CD4-positive, alpha-beta T cell (primary cell): ENCODE measurements at regions of chrX and their contacts with region 1.

Region 1: GRCh38 chrX:47193475-47194193 is at the start of gene UBA1:
- DNase-seq: peak; percentile 83 to 99 (median 92)
- ATAC-seq: peak; percentile 79
- H3K4me3 ChIP-seq: peak within 1 kb of the TSS; percentile 78
- H3K4me3 Mint-ChIP-seq: peak within 1 kb of the TSS; percentile 99
- H3K27ac ChIP-seq: peak within 1 kb of the TSS; percentile 83 to 88
- H3K27ac Mint-ChIP-seq: peak within 1 kb of the TSS; percentile 92
- H3K4me1 ChIP-seq: peaks cover 70% of the 10 kb centered on the region
- H3K4me1 Mint-ChIP-seq: peaks cover 71% of the 10 kb centered on the region
- H3K27me3 ChIP-seq: no peaks in the 10 kb centered on the region
- H3K27me3 Mint-ChIP-seq: no peaks in the 10 kb centered on the region
- CTCF ChIP-seq: peak; percentile 57
- total RNA-seq, gene UBA1: 70.0 to 72.1 TPM

Region 2: GRCh38 chrX:46140272-46140671 is 1053.4 kb before region 1 on chrX:
- CTCF ChIA-PET with region 1: no interaction called
- POLR2A ChIA-PET with region 1: no interaction called
- intact Hi-C with region 1: no loop called
- DNase-seq: no peak
- ATAC-seq: no peak
- H3K4me3 ChIP-seq: no peak overlapping the region
- H3K4me3 Mint-ChIP-seq: no peak overlapping the region
- H3K27ac ChIP-seq: no peak overlapping the region
- H3K27ac Mint-ChIP-seq: no peak overlapping the region
- H3K4me1 ChIP-seq: no peaks in the 10 kb centered on the region
- H3K4me1 Mint-ChIP-seq: no peaks in the 10 kb centered on the region
- H3K27me3 ChIP-seq: no peaks in the 10 kb centered on the region
- H3K27me3 Mint-ChIP-seq: no peaks in the 10 kb centered on the region
- CTCF ChIP-seq: no peak

Region 3: GRCh38 chrX:47144626-47145394 is 48.8 kb before region 1 on chrX and contains the starts of genes NDUFB11 and RBM10:
- CTCF ChIA-PET with region 1: interaction called, 7 read pairs
- POLR2A ChIA-PET with region 1: interaction called, 29 read pairs
- intact Hi-C with region 1: loop called (anchors 1 to 2 kb)
- DNase-seq: peak; percentile 74 to 95 (median 84)
- ATAC-seq: peak; percentile 81
- H3K4me3 ChIP-seq: peak within 1 kb of the TSS; percentile 85
- H3K4me3 Mint-ChIP-seq: peak within 1 kb of the TSS; percentile 98
- H3K27ac ChIP-seq: peak within 1 kb of the TSS; percentile 88 to 93
- H3K27ac Mint-ChIP-seq: peak within 1 kb of the TSS; percentile 99
- H3K4me1 ChIP-seq: peaks cover 31% of the 10 kb centered on the region
- H3K4me1 Mint-ChIP-seq: peaks cover 52% of the 10 kb centered on the region
- H3K27me3 ChIP-seq: no peaks in the 10 kb centered on the region
- H3K27me3 Mint-ChIP-seq: no peaks in the 10 kb centered on the region
- CTCF ChIP-seq: peak; percentile 58
- total RNA-seq, gene NDUFB11: 50.1 to 53.2 TPM
- total RNA-seq, gene RBM10: 27.3 to 29.4 TPM

Region 4: GRCh38 chrX:47233337-47234113 is 39.9 kb after region 1 on chrX:
- CTCF ChIA-PET with region 1: no interaction called
- POLR2A ChIA-PET with region 1: interaction called, 19 read pairs
- intact Hi-C with region 1: loop called in 1 of 2 experiments (anchors 1 kb)
- DNase-seq: peak; percentile 87 to 98 (median 92)
- ATAC-seq: peak; percentile 88
- H3K4me3 ChIP-seq: peak overlapping the region; percentile 91
- H3K4me3 Mint-ChIP-seq: peak overlapping the region; percentile 91
- H3K27ac ChIP-seq: peak overlapping the region; percentile 95 to 98
- H3K27ac Mint-ChIP-seq: peak overlapping the region; percentile 93
- H3K4me1 ChIP-seq: peaks cover 10% of the 10 kb centered on the region
- H3K4me1 Mint-ChIP-seq: peaks cover 31% of the 10 kb centered on the region
- H3K27me3 ChIP-seq: no peaks in the 10 kb centered on the region
- H3K27me3 Mint-ChIP-seq: no peaks in the 10 kb centered on the region
- CTCF ChIP-seq: no peak

Region 5: GRCh38 chrX:47384502-47384901 is 190.9 kb after region 1 on chrX:
- CTCF ChIA-PET with region 1: interaction called, 12 read pairs
- POLR2A ChIA-PET with region 1: interaction called, 10 read pairs
- intact Hi-C with region 1: loop called (anchors 1 kb)
- DNase-seq: peak; percentile 51 to 87 (median 63)
- ATAC-seq: peak; percentile 50
- H3K4me3 ChIP-seq: no peak overlapping the region
- H3K4me3 Mint-ChIP-seq: peak overlapping the region; percentile 51
- H3K27ac ChIP-seq: no peak overlapping the region
- H3K27ac Mint-ChIP-seq: peak overlapping the region; percentile 74
- H3K4me1 ChIP-seq: peaks cover 16% of the 10 kb centered on the region
- H3K4me1 Mint-ChIP-seq: peaks cover 29% of the 10 kb centered on the region
- H3K27me3 ChIP-seq: no peaks in the 10 kb centered on the region
- H3K27me3 Mint-ChIP-seq: no peaks in the 10 kb centered on the region
- CTCF ChIP-seq: peak; percentile 70

Region 6: GRCh38 chrX:47523297-47523696 is 329.7 kb after region 1 on chrX:
- CTCF ChIA-PET with region 1: interaction called, 12 read pairs
- POLR2A ChIA-PET with region 1: interaction called, 9 read pairs
- intact Hi-C with region 1: loop called (anchors 1 kb)
- DNase-seq: peak; percentile 46 to 88 (median 76)
- ATAC-seq: peak; percentile 96
- H3K4me3 ChIP-seq: peak overlapping the region; percentile 55
- H3K4me3 Mint-ChIP-seq: peak overlapping the region; percentile 59
- H3K27ac ChIP-seq: no peak overlapping the region
- H3K27ac Mint-ChIP-seq: no peak overlapping the region
- H3K4me1 ChIP-seq: peaks cover 7% of the 10 kb centered on the region
- H3K4me1 Mint-ChIP-seq: no peaks in the 10 kb centered on the region
- H3K27me3 ChIP-seq: no peaks in the 10 kb centered on the region
- H3K27me3 Mint-ChIP-seq: no peaks in the 10 kb centered on the region
- CTCF ChIP-seq: peak; percentile 79

Region 7: GRCh38 chrX:48021026-48021900 is 827.6 kb after region 1 on chrX:
- CTCF ChIA-PET with region 1: no interaction called
- POLR2A ChIA-PET with region 1: interaction called, 3 read pairs
- intact Hi-C with region 1: loop called (anchors 5 to 10 kb)
- DNase-seq: peak; percentile 61 to 87 (median 76)
- ATAC-seq: peak; percentile 65
- H3K4me3 ChIP-seq: peak overlapping the region; percentile 77
- H3K4me3 Mint-ChIP-seq: peak overlapping the region; percentile 96
- H3K27ac ChIP-seq: peak overlapping the region; percentile 87 to 90
- H3K27ac Mint-ChIP-seq: peak overlapping the region; percentile 99
- H3K4me1 ChIP-seq: peaks cover 11% of the 10 kb centered on the region
- H3K4me1 Mint-ChIP-seq: peaks cover 20% of the 10 kb centered on the region
- H3K27me3 ChIP-seq: no peaks in the 10 kb centered on the region
- H3K27me3 Mint-ChIP-seq: no peaks in the 10 kb centered on the region
- CTCF ChIP-seq: no peak